Right lobe of liver (tissue), 6 donors: ENCODE measurements at regions of chr17 and their contacts with region 1.

Region 1: DNA sequence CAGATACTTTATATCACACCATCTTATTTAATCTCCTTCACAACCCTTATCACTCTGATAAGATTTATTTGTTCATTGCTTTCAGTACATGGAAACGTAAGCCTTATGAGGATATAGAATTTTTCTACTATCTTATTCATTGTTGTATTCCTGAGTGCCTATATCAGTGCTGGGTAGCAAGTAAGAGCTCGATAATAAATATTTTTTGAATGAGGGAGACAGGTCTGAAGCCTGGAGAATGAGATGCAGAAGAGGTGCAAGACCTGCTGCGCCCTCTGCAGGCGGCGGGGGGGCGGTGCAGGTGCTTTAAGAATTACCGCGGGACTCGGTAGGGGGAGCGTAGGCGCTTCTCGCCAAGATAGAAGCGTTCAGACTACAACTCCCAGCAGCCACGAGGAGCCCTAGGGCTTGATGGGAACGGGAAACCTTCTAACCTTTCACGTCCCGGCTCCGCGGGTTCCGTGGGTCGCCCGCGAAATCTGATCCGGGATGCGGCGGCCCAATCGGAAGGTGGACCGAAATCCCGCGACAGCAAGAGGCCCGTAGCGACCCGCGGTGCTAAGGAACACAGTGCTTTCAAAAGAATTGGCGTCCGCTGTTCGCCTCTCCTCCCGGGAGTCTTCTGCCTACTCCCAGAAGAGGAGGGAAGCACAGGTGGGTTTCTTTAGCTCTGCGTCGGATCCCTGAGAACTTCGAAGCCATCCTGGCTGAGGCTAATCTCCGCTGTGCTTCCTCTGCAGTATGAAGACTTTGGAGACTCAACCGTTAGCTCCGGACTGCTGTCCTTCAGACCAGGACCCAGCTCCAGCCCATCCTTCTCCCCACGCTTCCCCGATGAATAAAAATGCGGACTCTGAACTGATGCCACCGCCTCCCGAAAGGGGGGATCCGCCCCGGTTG is at the start of gene WRAP53:
- DNase-seq: peak; percentile 95 to 98 (median 97)
- ATAC-seq: peak; percentile 86 to 95 (median 89)
- H3K4me3 ChIP-seq: peak within 1 kb of the TSS; percentile 69 to 94 (median 88)
- H3K27ac ChIP-seq: peak within 1 kb of the TSS; percentile 90 to 98 (median 93)
- H3K4me1 ChIP-seq: peaks cover 0 to 22% (median 10%) of the 10 kb centered on the region in 4 donors
- H3K27me3 ChIP-seq: no peaks in the 10 kb centered on the region
- CTCF ChIP-seq: peak; percentile 99 to 100 (median 100)
- POLR2A ChIP-seq: peak; percentile 23
- total RNA-seq, gene WRAP53: 1.9 to 3.8 (median 3.0) TPM

Region 2: GRCh38 chr17:7394452-7395191 is 293.5 kb before region 1 on chr17 and contains the start of gene PLSCR3:
- intact Hi-C with region 1: no loop called
- DNase-seq: peak; percentile 92 to 95 (median 94)
- ATAC-seq: peak; percentile 86 to 96 (median 93)
- H3K4me3 ChIP-seq: peak within 1 kb of the TSS; percentile 60 to 84 (median 63)
- H3K27ac ChIP-seq: peak within 1 kb of the TSS; percentile 84 to 95 (median 92)
- H3K4me1 ChIP-seq: peaks cover 0 to 6% (median 0%) of the 10 kb centered on the region in 4 donors
- H3K27me3 ChIP-seq: no peaks in the 10 kb centered on the region
- CTCF ChIP-seq: peak; percentile 17 to 36 (median 30)
- POLR2A ChIP-seq: peak; percentile 90
- total RNA-seq, gene PLSCR3: 5.5 to 8.9 (median 6.4) TPM

Region 3: DNA sequence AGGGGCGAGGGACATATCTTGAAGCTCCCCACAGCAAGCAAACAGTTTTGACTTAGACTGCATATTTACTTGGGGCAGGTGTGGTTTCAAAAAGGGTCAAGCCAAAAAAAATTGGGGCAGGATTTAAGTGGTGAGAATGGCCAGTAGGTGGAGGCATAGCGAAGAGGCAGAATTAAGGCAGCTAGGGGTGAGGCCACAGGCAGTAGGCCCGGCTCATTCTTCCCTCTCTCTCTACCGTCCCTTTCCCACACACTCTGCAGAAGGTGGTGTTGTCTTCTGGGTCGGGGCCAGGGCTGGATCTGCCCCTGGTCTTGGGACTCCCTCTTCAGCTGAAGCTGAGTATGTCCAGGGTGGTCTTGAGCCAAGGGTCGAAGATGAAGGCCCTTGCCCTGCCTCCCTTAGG is 55.7 kb before region 1 on chr17:
- intact Hi-C with region 1: loop called (anchors 10 kb)
- DNase-seq: peak in 2 of 3 donors; percentile 56 to 59
- ATAC-seq: peak; percentile 29 to 43 (median 32)
- H3K4me3 ChIP-seq: no peak overlapping the region
- H3K27ac ChIP-seq: peak overlapping the region in 2 of 3 donors; percentile 77
- H3K4me1 ChIP-seq: peaks cover 0 to 47% (median 19%) of the 10 kb centered on the region in 4 donors
- H3K27me3 ChIP-seq: no peaks in the 10 kb centered on the region
- CTCF ChIP-seq: peak; percentile 41 to 51 (median 44)
- POLR2A ChIP-seq: no peak